ENCODE measurements at regions of chr6 and their contacts with region 1.

Region 1: DNA sequence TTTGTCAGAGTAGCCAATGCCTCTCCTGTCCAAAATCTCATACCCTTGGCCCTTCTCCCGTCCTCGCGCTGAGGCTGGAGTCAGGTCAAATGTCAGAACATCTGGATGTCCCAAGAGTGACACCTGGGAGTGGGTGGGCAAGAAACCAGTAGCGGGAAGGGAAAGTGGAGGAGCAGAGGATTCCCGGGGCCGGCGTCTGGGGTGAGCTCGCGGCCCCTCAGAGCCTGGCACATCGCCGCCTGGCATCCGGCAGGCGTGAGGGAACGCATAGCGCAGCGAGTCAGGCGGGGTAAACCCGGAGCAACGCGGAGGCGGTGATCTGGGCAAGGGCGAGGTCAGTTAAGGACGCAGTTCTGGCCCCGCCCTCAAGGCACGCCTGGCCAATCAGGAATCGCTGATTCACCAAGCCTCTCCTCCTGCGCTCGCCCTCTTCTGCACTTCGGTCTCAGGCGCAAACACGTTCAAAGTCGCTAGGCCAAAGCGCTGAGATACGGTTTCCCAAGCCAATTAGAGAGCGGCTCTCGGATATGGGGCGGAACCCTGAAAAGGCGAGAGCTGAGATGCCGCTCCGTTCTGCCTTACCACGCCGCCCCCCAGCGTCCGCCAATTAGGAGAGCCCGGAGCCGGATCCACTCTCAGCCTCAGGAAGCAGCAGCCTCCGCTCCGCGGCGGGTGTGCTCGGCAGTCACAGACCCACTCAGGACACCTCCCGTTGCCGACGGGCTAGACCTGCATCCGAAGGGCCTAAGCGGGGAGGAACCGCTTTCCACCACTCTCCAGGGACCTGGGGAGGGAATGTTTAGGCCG is 22.5 kb downstream of the VPS52 start:
- DNase-seq: peak; percentile 96 to 98
- ATAC-seq: peak; percentile 96 to 98
- H3K4me3 ChIP-seq: peak overlapping the region; percentile 54 to 83 (median 65)
- H3K27ac ChIP-seq: peak overlapping the region; percentile 84 to 96 (median 88)
- H3K4me1 ChIP-seq: peaks cover 10 to 17% of the 10 kb centered on the region in 2 donors
- H3K27me3 ChIP-seq: no peaks in the 10 kb centered on the region
- CTCF ChIP-seq: peak in 2 of 5 experiments; percentile 16 to 30
- POLR2A ChIP-seq: peak; percentile 51 to 63

Region 2: GRCh38 chr6:33014841-33015634 is 234.1 kb before region 1 on chr6:
- in situ Hi-C with region 1: loop called (anchors 10 kb)
- intact Hi-C with region 1: loop called (anchors 1 kb)
- DNase-seq: no peak
- ATAC-seq: peak; percentile 72
- H3K4me3 ChIP-seq: no peak overlapping the region
- H3K27ac ChIP-seq: peak overlapping the region in 3 of 4 donors; percentile 35 to 62 (median 40)
- H3K4me1 ChIP-seq: peaks cover 11 to 12% of the 10 kb centered on the region in 2 donors
- H3K27me3 ChIP-seq: peaks cover 0 to 5% (median 5%) of the 10 kb centered on the region in 3 donors
- CTCF ChIP-seq: peak; percentile 69 to 84 (median 81)
- POLR2A ChIP-seq: no peak

Region 3: GRCh38 chr6:33126101-33126714 is 122.9 kb before region 1 on chr6:
- in situ Hi-C with region 1: loop called in 1 of 4 experiments (anchors 10 kb)
- intact Hi-C with region 1: no loop called
- DNase-seq: peak; percentile 4 to 24
- ATAC-seq: no peak
- H3K4me3 ChIP-seq: no peak overlapping the region
- H3K27ac ChIP-seq: no peak overlapping the region
- H3K4me1 ChIP-seq: no peaks in the 10 kb centered on the region
- H3K27me3 ChIP-seq: no peaks in the 10 kb centered on the region
- CTCF ChIP-seq: peak in 3 of 5 experiments; percentile 35 to 54 (median 39)
- POLR2A ChIP-seq: no peak

Region 4: DNA sequence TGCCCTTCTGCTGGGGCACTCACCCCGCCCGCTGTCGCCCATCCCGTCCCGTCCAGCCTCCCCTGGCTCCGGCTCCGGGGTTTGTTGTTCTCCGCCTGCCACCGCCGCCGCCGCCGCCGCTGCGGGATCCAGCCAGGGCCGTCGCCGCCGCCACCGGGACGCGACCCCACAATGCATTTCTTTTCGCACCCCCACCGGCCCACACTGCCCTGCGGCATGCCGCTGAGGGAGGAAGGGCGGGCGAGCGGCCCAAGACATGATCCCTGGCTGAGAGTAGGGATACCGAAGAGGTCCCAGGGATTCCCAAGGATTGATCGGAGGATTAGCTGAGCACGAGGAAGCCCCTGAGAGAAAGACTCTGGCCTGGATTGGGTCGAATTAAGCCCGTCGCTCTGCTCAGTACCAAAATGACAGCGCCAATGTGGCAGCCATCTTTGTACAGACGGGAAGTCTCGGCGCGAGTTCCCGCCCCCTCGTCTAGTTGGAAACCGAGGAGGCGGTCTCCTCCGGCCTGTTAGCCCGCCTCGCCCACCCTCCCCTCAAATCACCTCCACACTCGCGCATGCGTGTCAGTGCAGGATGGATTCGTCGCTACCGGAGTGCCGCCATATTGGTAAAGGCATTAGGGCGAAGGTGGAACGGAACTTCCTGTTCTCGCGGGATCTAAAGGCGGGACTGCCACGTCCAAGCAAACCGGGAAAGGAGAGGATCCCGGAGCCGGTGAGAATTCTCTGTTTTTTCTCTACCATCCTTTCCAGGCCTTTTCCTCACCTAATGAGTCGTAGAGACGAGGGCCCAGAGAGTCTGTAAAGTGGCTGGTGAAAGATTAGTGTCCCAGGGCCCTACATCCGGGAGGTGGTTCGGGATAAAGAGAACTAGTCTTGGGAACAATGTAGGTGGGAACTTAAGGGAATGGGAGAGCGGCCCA is 48.6 kb before region 1 on chr6 and contains the starts of genes RXRB and SLC39A7:
- in situ Hi-C with region 1: loop called in 1 of 4 experiments (anchors 10 kb)
- intact Hi-C with region 1: loop called (anchors 1 kb)
- DNase-seq: peak; percentile 99
- ATAC-seq: peak; percentile 81 to 86
- H3K4me3 ChIP-seq: peak within 1 kb of the TSS; percentile 84 to 98 (median 86)
- H3K27ac ChIP-seq: peak within 1 kb of the TSS; percentile 94 to 98 (median 96)
- H3K4me1 ChIP-seq: peaks cover 44 to 52% of the 10 kb centered on the region in 2 donors
- H3K27me3 ChIP-seq: no peaks in the 10 kb centered on the region
- CTCF ChIP-seq: peak in 1 of 5 experiments; percentile 20
- POLR2A ChIP-seq: peak; percentile 61 to 71
- total RNA-seq, gene RXRB: 20.8 to 38.4 (median 24.6) TPM
- total RNA-seq, gene SLC39A7: 21.9 to 45.4 (median 26.2) TPM

Region 5: GRCh38 chr6:33271458-33272274 is 22.5 kb after region 1 on chr6 and contains the starts of genes RPS18 and VPS52:
- in situ Hi-C with region 1: no loop called
- intact Hi-C with region 1: loop called (anchors 2 kb)
- DNase-seq: peak; percentile 95 to 96
- ATAC-seq: peak; percentile 98 to 99
- H3K4me3 ChIP-seq: peak within 1 kb of the TSS; percentile 67 to 95 (median 80)
- H3K27ac ChIP-seq: peak within 1 kb of the TSS; percentile 85 to 96 (median 90)
- H3K4me1 ChIP-seq: peaks cover 46 to 53% of the 10 kb centered on the region in 2 donors
- H3K27me3 ChIP-seq: no peaks in the 10 kb centered on the region
- CTCF ChIP-seq: no peak
- POLR2A ChIP-seq: peak; percentile 92 to 95
- total RNA-seq, gene RPS18: 1,834 to 2,142 (median 2,010) TPM
- total RNA-seq, gene VPS52: 28.7 to 52.8 (median 41.2) TPM